A549 (cell line): ENCODE measurements at regions of chr11 and their contacts with region 1.

Region 1: GRCh38 chr11:128157423-128158298 is 429.7 kb downstream of the ETS1 start:
- DNase-seq: peak; percentile 20 to 74
- ATAC-seq: peak; percentile 81 to 89
- H3K4me3 ChIP-seq: peak overlapping the region; percentile 30; the same call in 1 of the 3 replicates
- H3K27ac ChIP-seq: peak overlapping the region; percentile 64 to 79
- H3K4me1 ChIP-seq: no peaks in the 10 kb centered on the region
- CTCF ChIP-seq: peak; percentile 96
- EP300 ChIP-seq: no peak
- POLR2A ChIP-seq: no peak
- RAD21 ChIP-seq: peak; percentile 73 to 80

Region 2: GRCh38 chr11:128029219-128029722 is 128.4 kb before region 1 on chr11:
- CTCF ChIA-PET with region 1: interaction called, 21 read pairs
- POLR2A ChIA-PET with region 1: no interaction called
- DNase-seq: no peak
- ATAC-seq: no peak
- H3K4me3 ChIP-seq: no peak overlapping the region
- H3K27ac ChIP-seq: no peak overlapping the region
- H3K4me1 ChIP-seq: peaks cover 6% of the 10 kb centered on the region; the same call in 1 of the 3 replicates
- CTCF ChIP-seq: no peak
- EP300 ChIP-seq: no peak
- POLR2A ChIP-seq: no peak
- RAD21 ChIP-seq: no peak

Region 3: DNA sequence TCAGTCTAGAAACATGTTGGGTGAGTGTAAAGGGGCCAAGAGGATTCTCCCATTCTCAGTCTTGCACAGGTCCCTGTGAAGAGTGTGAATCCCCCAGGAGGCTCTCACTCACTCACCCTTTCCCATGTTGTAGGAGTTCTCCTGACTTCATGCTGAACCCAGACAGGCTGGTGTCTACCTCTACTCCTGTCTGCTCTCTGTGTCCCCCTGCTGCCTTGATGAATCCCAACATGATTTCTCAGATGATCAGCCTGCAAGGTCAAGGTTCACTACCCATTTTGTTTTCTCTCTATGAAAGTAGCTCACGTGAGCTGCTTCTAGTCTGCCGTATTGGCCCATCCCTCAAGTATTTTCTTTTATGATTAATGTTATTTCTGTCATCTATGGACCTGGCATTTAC is 70.9 kb before region 1 on chr11:
- CTCF ChIA-PET with region 1: no interaction called
- POLR2A ChIA-PET with region 1: no interaction called
- DNase-seq: no peak
- ATAC-seq: no peak
- H3K4me3 ChIP-seq: no peak overlapping the region
- H3K27ac ChIP-seq: no peak overlapping the region
- H3K4me1 ChIP-seq: no peaks in the 10 kb centered on the region
- CTCF ChIP-seq: no peak
- EP300 ChIP-seq: no peak
- POLR2A ChIP-seq: no peak
- RAD21 ChIP-seq: no peak

Region 4: DNA sequence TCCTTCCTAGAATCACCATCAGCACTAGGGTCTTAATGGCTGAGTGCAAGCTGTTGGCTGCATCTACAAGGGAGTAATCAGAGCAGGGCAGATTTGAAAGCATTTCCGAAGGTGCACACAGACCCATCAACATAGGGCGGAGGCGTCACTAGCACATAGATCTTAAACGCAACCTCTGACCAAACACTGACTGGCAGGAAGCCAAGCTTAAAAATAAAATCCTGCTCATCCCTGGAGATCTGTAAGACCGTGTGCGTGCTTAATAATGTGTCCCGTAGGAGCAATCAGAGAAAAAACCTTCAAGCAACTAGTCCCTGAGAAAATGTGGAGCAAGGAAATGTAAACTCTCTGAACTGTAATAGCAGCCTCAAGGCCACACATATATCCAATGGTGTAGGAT is 40.8 kb before region 1 on chr11:
- CTCF ChIA-PET with region 1: no interaction called
- POLR2A ChIA-PET with region 1: no interaction called
- DNase-seq: no peak
- ATAC-seq: no peak
- H3K4me3 ChIP-seq: no peak overlapping the region
- H3K27ac ChIP-seq: no peak overlapping the region
- H3K4me1 ChIP-seq: no peaks in the 10 kb centered on the region
- CTCF ChIP-seq: no peak
- EP300 ChIP-seq: no peak
- POLR2A ChIP-seq: no peak
- RAD21 ChIP-seq: no peak

Region 5: DNA sequence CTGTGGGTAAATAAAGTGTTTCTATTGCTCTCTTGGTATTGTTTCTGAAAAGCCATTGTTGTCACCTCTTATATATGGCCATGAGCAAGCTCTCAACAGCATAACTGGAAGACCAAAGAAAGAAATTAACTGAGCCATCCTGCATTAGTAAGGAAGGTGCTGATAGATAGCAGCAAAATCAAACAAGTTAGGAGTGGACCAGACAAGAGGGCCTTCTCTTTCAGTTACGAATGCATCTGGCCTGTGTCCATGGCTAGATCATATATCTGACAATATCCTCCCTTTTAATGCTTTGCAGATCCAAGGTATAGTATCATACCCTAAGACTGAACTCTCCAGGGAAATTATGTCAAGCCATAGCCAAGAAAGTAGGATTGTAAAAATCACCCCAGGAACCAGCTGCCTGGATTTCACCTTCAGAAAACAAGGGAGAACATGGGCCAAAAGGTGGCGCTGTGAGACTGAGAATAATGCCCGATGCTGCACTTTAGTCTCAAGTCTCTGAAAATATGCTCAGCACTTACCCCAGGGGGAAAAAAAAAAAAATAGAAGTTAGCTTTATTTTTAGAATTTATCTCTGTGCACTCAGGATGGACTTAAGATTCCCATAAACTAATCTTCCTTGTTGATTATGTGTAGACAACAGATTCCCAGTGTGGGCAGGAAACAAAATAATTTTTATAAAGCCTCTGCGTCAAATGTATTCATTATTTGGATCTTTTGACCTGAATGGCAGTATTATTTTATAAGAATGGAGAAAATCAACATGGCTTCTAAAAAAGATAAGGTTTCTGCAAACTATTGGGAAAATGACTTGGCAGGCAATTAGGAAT is 14.6 kb after region 1 on chr11:
- CTCF ChIA-PET with region 1: interaction called, 82 read pairs
- POLR2A ChIA-PET with region 1: no interaction called
- DNase-seq: peak; percentile 65 to 74
- ATAC-seq: peak; percentile 64 to 92; a peak in 5 of 6 replicates
- H3K4me3 ChIP-seq: no peak overlapping the region
- H3K27ac ChIP-seq: peak overlapping the region; percentile 6 to 52; a peak in 2 of 6 replicates
- H3K4me1 ChIP-seq: peaks cover 22% of the 10 kb centered on the region
- CTCF ChIP-seq: peak; percentile 81
- EP300 ChIP-seq: no peak
- POLR2A ChIP-seq: no peak
- RAD21 ChIP-seq: peak; percentile 91 to 93

Region 6: GRCh38 chr11:128214263-128214662 is 56.6 kb after region 1 on chr11:
- CTCF ChIA-PET with region 1: no interaction called
- POLR2A ChIA-PET with region 1: no interaction called
- DNase-seq: no peak
- ATAC-seq: no peak
- H3K4me3 ChIP-seq: no peak overlapping the region
- H3K27ac ChIP-seq: 0 out of 6 replicates have a peak overlapping the region, but pooled peaks of 1 of the 2 experiments have one; percentile 14
- H3K4me1 ChIP-seq: peaks cover 17% of the 10 kb centered on the region
- CTCF ChIP-seq: no peak
- EP300 ChIP-seq: no peak
- POLR2A ChIP-seq: no peak
- RAD21 ChIP-seq: no peak

Region 7: DNA sequence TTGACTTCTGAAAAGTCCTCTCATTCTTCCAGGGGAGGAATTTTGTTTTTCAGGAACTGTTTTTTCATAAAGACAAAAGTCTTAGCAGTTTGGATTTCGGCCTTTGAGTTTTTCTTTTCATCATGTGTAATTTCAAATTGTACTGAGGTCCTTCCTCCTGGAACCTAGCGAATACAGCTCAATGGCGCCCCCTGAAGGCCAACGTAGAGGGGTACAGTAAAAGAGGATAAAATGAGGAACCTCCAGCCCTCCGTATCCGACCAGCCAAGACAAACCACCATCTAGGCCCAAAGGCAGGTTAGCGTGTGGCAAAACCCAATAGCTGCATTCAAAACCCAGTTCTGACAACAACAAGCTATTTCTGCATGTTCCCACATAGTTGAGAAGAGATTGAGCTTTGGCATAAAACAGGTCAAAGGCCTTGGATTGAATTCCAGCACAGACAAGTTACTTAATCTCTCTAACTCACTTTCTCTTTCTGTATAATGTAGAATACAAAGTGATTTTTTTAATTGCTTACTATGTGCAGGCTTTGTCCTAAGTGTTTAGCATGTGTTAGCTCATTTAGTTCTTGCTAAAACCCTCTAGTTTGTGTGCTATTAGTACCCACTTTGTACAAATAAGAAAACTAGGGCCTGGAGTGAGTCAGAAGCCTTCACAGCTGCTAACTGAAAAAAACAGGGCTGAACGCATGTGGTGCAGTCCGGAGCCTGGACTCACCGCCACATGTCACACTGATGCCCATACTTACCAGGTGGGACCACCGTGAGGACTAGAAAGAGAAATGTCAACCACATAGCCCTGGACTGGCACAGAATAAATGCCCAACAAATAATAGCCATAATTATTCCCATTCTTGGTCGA is 472.9 kb after region 1 on chr11:
- CTCF ChIA-PET with region 1: interaction called, 38 read pairs
- POLR2A ChIA-PET with region 1: no interaction called
- DNase-seq: peak; percentile 53 to 70
- ATAC-seq: peak; percentile 91 to 95
- H3K4me3 ChIP-seq: no peak overlapping the region
- H3K27ac ChIP-seq: peak overlapping the region; percentile 43 to 61; a peak in 2 of 6 replicates
- H3K4me1 ChIP-seq: peaks cover 11% of the 10 kb centered on the region; the same call in 2 of the 3 replicates
- CTCF ChIP-seq: peak; percentile 74
- EP300 ChIP-seq: no peak
- POLR2A ChIP-seq: no peak
- RAD21 ChIP-seq: peak; percentile 92 to 94

Region 8: DNA sequence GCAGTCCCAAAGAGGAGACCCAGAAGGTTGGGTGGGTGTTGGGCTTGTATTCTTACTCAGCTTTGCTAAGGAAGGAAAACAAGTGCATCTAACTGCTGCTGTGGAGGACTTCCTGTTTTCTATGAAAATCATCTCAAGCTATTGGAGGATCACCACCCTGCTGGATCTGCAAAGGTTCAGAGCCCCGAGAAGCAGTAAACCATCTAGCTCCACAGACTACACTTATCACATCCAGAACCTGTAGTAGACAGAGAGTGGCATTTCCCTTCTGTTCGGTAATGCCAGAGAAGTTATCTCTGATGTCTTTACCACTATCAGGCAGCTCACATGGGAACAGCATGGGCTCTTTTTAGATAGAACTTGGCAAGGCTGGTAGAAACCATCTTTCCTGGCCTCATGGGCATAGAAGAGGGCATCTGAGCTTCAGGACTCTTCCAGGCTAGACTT is 687.7 kb after region 1 on chr11:
- CTCF ChIA-PET with region 1: interaction called, 10 read pairs
- POLR2A ChIA-PET with region 1: no interaction called
- DNase-seq: no peak
- ATAC-seq: no peak
- H3K4me3 ChIP-seq: no peak overlapping the region
- H3K27ac ChIP-seq: no peak overlapping the region
- H3K4me1 ChIP-seq: no peaks in the 10 kb centered on the region
- CTCF ChIP-seq: no peak
- EP300 ChIP-seq: no peak
- POLR2A ChIP-seq: no peak
- RAD21 ChIP-seq: no peak